ENCODE measurements at regions of chr2 and their contacts with region 1.

Region 1: GRCh38 chr2:169452080-169452479 is 27.2 kb upstream of the BBS5 start:
- DNase-seq: no peak
- ATAC-seq: peak; percentile 79
- H3K4me3 ChIP-seq: no peak overlapping the region
- H3K27ac ChIP-seq: no peak overlapping the region
- H3K4me1 ChIP-seq: no peaks in the 10 kb centered on the region
- H3K27me3 ChIP-seq: no peaks in the 10 kb centered on the region
- CTCF ChIP-seq: peak; percentile 25 to 53 (median 37); a peak in 4 of 6 replicates
- EP300 ChIP-seq: no peak
- POLR2A ChIP-seq: no peak
- RAD21 ChIP-seq: peak; percentile 40; the same call in 1 of the 2 replicates

Region 2: DNA sequence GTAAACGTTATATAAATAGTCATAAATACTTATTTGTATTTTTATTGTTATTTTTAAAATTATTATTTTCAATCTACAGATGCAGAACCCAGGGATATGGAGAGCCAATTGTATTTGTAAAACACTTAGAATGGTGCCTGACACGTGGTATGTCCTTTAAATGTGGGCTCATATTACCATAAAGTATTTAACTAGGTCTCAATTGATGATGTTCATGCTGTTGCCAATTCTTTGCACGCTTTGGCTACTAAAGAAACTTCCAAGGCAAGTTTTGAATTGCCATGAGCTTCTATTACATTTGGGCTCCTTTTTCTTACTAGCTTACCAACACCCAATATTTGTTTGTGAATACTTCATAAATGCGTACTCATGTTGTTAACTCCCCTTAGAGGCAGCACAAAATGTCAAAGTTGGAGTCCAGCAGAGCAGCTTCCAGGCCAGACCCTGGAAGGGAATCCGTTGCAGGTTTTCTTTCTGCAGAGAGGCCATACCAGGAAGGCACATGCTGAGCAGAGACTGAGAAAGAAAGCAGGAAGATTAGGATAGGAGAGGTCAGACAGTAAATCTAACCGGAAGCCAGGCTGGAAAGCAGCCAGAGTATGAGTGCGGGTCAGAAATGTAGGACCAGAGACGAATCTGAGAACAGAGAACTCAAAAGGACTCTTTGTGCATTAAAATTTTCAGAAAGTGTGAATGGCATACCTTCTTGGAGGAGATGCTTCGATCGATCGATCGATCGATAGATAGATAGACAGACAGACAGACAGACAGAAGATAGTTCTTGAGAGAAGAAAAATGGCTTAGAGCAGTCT is 653.8 kb before region 1 on chr2:
- CTCF ChIA-PET with region 1: no interaction called
- POLR2A ChIA-PET with region 1: no interaction called
- RAD21 ChIA-PET with region 1: no interaction called
- SMC1A ChIA-PET with region 1: no interaction called
- in situ Hi-C with region 1: no loop called
- intact Hi-C with region 1: no loop called
- DNase-seq: no peak
- ATAC-seq: no peak
- H3K4me3 ChIP-seq: no peak overlapping the region
- H3K27ac ChIP-seq: no peak overlapping the region
- H3K4me1 ChIP-seq: no peaks in the 10 kb centered on the region
- H3K27me3 ChIP-seq: no peaks in the 10 kb centered on the region; a peak in 1 of 4 replicates
- CTCF ChIP-seq: no peak
- EP300 ChIP-seq: no peak
- POLR2A ChIP-seq: no peak
- RAD21 ChIP-seq: no peak

Region 3: GRCh38 chr2:169438460-169439072 is 13.5 kb before region 1 on chr2:
- CTCF ChIA-PET with region 1: interaction called, 10 read pairs
- POLR2A ChIA-PET with region 1: no interaction called
- RAD21 ChIA-PET with region 1: no interaction called
- SMC1A ChIA-PET with region 1: interaction called, 3 read pairs
- in situ Hi-C with region 1: no loop called
- intact Hi-C with region 1: no loop called
- DNase-seq: no peak
- ATAC-seq: no peak
- H3K4me3 ChIP-seq: no peak overlapping the region
- H3K27ac ChIP-seq: no peak overlapping the region
- H3K4me1 ChIP-seq: no peaks in the 10 kb centered on the region
- H3K27me3 ChIP-seq: no peaks in the 10 kb centered on the region
- CTCF ChIP-seq: no peak
- EP300 ChIP-seq: no peak
- POLR2A ChIP-seq: no peak
- RAD21 ChIP-seq: no peak

Region 4: GRCh38 chr2:169485650-169486138 is 33.6 kb after region 1 on chr2:
- CTCF ChIA-PET with region 1: no interaction called
- POLR2A ChIA-PET with region 1: no interaction called
- RAD21 ChIA-PET with region 1: no interaction called
- SMC1A ChIA-PET with region 1: no interaction called
- in situ Hi-C with region 1: no loop called
- intact Hi-C with region 1: no loop called
- DNase-seq: no peak
- ATAC-seq: no peak
- H3K4me3 ChIP-seq: no peak overlapping the region
- H3K27ac ChIP-seq: no peak overlapping the region
- H3K4me1 ChIP-seq: no peaks in the 10 kb centered on the region
- H3K27me3 ChIP-seq: no peaks in the 10 kb centered on the region
- CTCF ChIP-seq: no peak
- EP300 ChIP-seq: no peak
- POLR2A ChIP-seq: no peak
- RAD21 ChIP-seq: no peak